ENCODE measurements at regions of chr4 and their contacts with region 1.

Region 1: DNA sequence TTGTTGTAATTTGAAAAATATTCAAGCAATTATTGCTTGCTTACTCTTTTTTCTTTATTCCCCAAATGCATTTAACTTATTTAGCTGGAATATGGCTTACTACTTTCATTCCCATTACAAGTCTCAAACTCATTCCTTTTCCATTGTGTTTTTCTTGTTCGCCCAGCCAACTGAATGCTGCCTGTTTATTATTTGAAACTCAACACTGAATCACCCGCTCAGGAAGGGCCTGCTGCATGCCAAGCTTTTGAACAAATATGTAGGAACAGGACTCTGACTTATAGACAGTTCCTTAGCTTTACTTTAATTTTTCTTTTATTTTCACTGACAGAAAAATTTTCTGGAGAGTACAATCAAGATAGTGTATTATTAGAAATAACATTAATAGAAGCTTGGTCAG is 12.9 kb downstream of the PCDH18 start:
- DNase-seq: peak in 1 of 2 donors; percentile 35
- ATAC-seq: no peak
- H3K4me3 ChIP-seq: no peak overlapping the region
- H3K27ac ChIP-seq: peak overlapping the region in 1 of 2 donors; percentile 57
- H3K4me1 ChIP-seq: peaks cover 2 to 9% of the 10 kb centered on the region in 2 donors
- H3K27me3 ChIP-seq: no peaks in the 10 kb centered on the region

Region 2: DNA sequence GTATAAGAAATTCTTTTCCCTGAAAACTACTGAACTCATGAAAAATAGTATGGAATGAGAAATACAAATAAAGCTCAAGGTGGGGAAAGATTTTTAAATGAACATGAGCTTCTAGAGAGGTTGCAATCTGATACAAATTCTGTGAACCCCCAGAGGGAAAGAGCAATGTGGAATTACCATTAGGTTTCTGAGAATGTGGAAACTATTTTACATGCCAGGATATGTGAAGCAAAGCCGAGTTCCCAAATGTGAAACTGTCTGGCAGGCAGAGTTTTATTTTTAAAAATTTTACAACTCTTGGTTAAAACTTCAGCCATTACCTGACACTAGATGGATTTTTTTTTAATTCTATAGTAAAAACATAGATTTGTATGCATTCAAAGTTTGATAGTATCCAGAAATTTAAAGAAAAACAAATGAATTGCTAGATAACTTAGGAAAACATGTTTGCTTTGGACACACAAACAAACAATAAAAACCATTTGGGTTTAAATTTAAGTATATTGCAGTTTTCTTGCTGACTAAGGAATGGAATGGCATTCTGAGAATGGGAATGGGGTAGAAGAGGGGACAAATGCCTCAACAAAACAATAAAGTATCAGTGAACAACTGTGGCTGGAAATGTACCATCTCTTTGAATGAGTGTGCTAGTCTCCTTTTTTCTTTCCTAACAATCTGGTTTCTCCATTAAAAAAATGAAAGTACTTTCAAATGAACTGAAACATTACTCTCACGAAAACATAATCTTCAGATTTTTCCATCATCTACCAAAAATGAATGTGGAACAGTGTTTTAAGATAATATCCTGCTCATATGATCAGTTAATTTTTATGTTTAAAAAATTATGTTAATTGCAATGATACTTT is 86.7 kb before region 1 on chr4:
- intact Hi-C with region 1: loop called in 1 of 2 experiments (anchors 5 kb)
- DNase-seq: no peak
- ATAC-seq: no peak
- H3K4me3 ChIP-seq: peak overlapping the region; percentile 9 to 54
- H3K27ac ChIP-seq: peak overlapping the region in 1 of 2 donors; percentile 77
- H3K4me1 ChIP-seq: peaks cover 0 to 3% of the 10 kb centered on the region in 2 donors
- H3K27me3 ChIP-seq: no peaks in the 10 kb centered on the region

Measured in aorta (tissue), 5 donors.